PC-3 (cell line): ENCODE measurements at regions of chr2 and their contacts with region 1.

Region 1: DNA sequence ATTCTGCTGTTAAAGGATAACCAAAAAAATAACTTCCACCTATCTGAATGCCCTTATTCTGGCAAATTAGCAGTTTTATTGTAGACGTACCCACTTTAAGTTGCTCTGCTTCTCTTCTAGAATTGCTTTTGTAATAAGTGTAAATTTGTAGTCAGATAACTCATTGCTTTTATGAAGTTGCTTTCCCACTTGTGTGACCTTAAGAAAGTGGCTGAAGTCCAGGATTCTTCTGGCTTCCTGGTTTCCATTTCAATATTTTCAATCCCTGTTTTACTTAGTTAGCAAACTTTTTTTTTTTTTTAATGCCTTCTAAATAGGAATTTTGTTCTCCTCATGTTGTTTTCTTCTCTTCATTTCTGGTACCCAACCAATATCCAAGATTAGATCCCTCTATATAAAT is 59.8 kb downstream of the GLS start:
- DNase-seq: no peak
- ATAC-seq: peak; percentile 29
- H3K4me3 ChIP-seq: no peak overlapping the region
- H3K27ac ChIP-seq: no peak overlapping the region
- H3K4me1 ChIP-seq: no peaks in the 10 kb centered on the region
- H3K27me3 ChIP-seq: no peaks in the 10 kb centered on the region
- CTCF ChIP-seq: no peak

Region 2: DNA sequence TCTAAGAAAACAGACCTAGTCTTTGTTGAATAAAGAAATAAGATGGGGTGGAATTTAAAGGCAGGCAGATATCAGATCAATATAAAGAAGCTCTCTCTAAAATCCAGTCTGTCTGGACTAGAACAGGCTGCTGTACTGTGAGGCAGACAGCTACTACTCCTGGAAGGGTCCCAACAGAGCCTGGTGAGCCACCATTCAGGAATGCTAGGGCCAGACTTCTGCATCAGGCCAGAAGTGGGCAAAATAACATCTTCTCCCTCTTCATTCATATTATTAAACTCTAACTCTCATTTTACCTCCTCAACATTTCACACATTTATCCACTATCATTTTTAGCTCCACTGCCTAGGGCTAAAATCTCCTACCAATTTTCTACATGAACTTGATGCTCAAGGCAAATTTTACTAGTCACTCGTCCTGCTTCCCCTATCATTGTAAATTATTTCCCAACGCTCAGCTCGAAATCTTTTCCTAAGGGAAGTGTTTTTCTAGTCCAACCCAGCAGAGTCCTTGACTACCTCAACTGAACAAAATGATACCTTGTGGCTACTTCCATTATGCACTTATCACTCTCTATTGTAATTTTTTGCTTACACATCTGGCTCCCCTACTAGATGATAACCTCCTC is 105.0 kb before region 1 on chr2:
- CTCF ChIA-PET with region 1: no interaction called
- POLR2A ChIA-PET with region 1: no interaction called
- intact Hi-C with region 1: loop called (anchors 5 kb)
- DNase-seq: peak; percentile 91
- ATAC-seq: peak; percentile 75
- H3K4me3 ChIP-seq: no peak overlapping the region
- H3K27ac ChIP-seq: peak overlapping the region; percentile 2; the same call in 1 of the 2 replicates
- H3K4me1 ChIP-seq: peaks cover 59% of the 10 kb centered on the region
- H3K27me3 ChIP-seq: no peaks in the 10 kb centered on the region
- CTCF ChIP-seq: no peak

Region 3: GRCh38 chr2:190904640-190905261 is 35.7 kb before region 1 on chr2:
- CTCF ChIA-PET with region 1: no interaction called
- POLR2A ChIA-PET with region 1: no interaction called
- intact Hi-C with region 1: loop called (anchors 5 kb)
- DNase-seq: no peak
- ATAC-seq: no peak
- H3K4me3 ChIP-seq: no peak overlapping the region
- H3K27ac ChIP-seq: no peak overlapping the region
- H3K4me1 ChIP-seq: no peaks in the 10 kb centered on the region
- H3K27me3 ChIP-seq: no peaks in the 10 kb centered on the region
- CTCF ChIP-seq: no peak

Region 4: GRCh38 chr2:191369036-191369435 is 428.6 kb after region 1 on chr2:
- CTCF ChIA-PET with region 1: no interaction called
- POLR2A ChIA-PET with region 1: no interaction called
- intact Hi-C with region 1: no loop called
- DNase-seq: peak; percentile 44
- ATAC-seq: no peak
- H3K4me3 ChIP-seq: no peak overlapping the region
- H3K27ac ChIP-seq: no peak overlapping the region
- H3K4me1 ChIP-seq: 0 out of 2 replicates have a peak, but pooled peaks cover 9% of the 10 kb centered on the region
- H3K27me3 ChIP-seq: no peaks in the 10 kb centered on the region
- CTCF ChIP-seq: peak; percentile 65